ENCODE measurements at regions of chr3 and their contacts with region 1.

Region 1: DNA sequence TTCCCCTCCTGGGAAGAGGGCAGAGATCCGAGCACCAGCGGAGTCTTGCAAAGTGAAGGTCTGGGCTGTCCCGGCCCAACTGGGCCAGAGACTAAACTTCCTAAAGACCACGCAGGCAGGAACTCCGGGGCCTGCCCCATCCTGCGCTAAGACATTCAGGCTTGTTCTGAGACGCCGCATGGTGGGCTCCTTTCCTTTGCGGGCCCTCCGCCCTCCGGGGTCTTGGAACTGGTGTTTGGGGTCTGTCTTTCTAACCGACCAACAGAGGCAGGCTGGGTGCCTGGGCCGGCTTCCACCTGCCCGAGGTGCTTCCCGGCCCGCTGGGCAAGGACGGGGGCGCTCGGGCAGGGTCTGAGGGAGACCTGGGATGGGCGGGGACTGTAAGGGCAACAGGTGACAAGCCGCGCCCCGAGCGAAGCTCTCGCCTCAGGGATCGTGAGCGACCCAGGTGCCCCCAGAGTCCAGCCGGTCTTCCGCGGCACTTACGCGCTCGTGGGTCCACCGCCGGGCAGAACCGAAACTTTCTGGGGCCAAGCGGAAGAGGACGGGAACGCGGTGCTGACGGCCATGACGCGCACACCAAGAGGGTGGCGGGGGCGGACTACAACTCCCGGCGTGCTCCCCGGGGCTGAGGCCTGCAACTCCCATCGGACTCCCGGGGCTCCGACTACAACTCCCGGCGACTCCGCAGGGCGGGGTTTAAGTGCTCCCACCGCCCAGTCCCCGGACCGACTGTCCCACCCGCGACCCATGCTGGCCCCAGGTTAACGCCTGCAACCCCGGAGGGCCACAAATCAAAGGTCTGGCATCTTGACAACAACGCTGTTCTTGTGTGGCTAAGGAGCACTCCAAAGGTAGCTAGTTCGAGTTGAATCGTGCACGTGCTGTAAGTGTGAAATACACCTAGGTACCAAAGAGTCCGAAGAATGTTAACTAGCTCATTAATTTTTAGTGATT is at the start of gene FYCO1:
- DNase-seq: peak; percentile 89
- ATAC-seq: peak; percentile 83
- H3K4me3 Mint-ChIP-seq: peak within 1 kb of the TSS; percentile 93
- H3K27ac Mint-ChIP-seq: peak within 1 kb of the TSS; percentile 90
- H3K4me1 Mint-ChIP-seq: peaks cover 43% of the 10 kb centered on the region
- H3K27me3 Mint-ChIP-seq: peaks cover 16% of the 10 kb centered on the region
- total RNA-seq, gene FYCO1: 37.9 to 39.1 TPM

Region 2: DNA sequence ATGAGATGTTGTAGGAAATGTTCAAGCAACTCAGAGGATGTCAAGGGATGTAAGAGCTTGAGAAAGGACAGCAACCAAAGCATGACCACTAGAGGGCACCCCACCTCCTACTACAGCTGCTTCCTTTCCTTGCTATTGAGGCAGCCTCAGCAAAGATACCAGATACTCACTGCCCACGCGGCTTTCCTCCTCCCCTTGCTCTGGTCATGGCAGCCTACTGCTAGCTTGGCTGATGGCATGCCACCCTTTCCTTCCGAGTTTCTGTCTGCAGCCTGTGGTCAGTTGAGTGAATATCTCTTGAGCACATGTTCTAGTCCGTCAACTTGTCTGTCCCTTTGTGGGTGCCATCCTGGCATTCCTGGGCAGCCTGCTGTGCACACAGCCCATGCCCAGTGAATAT is 56.6 kb before region 1 on chr3:
- POLR2A ChIA-PET with region 1: interaction called, 11 read pairs
- DNase-seq: peak; percentile 72
- ATAC-seq: peak; percentile 67
- H3K4me3 Mint-ChIP-seq: no peak overlapping the region
- H3K27ac Mint-ChIP-seq: peak overlapping the region; percentile 63
- H3K4me1 Mint-ChIP-seq: peaks cover 47% of the 10 kb centered on the region
- H3K27me3 Mint-ChIP-seq: no peaks in the 10 kb centered on the region

Region 3: GRCh38 chr3:45972534-45973402 is 22.7 kb before region 1 on chr3:
- POLR2A ChIA-PET with region 1: interaction called, 85 read pairs
- DNase-seq: no peak
- ATAC-seq: peak; percentile 41
- H3K4me3 Mint-ChIP-seq: peak overlapping the region; percentile 55
- H3K27ac Mint-ChIP-seq: peak overlapping the region; percentile 83
- H3K4me1 Mint-ChIP-seq: peaks cover 71% of the 10 kb centered on the region
- H3K27me3 Mint-ChIP-seq: no peaks in the 10 kb centered on the region

Region 4: DNA sequence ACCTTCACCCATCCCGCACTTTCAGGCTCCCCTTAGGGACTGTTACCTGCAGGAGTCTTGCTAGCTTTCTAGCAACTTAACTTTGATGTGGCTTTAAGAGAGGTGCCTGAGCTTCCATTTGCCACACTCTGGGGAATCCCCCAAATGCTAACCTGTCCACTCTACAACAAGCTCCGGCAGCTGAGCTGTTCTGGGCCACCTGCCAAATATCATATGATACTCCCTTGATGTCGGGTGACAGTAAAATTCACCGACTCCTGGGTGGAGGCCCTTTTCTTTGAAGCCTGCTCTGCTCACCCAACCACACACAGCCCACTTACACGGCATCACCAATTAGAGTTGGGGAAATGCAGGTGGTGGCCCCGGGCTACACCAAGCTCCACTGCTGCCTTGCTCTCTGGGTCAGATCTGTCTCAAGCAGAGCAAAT is 69.8 kb after region 1 on chr3:
- POLR2A ChIA-PET with region 1: interaction called, 12 read pairs
- DNase-seq: peak; percentile 60
- ATAC-seq: peak; percentile 96
- H3K4me3 Mint-ChIP-seq: peak overlapping the region; percentile 55
- H3K27ac Mint-ChIP-seq: peak overlapping the region; percentile 75
- H3K4me1 Mint-ChIP-seq: peaks cover 44% of the 10 kb centered on the region
- H3K27me3 Mint-ChIP-seq: peaks cover 24% of the 10 kb centered on the region

Measured in activated naive CD8-positive, alpha-beta T cell treated with anti-CD3 and anti-CD28 coated beads, Interleukin-2, amount 10 ng/mL, durations not matched to agents 7 days and 5 days (primary cell).